Aorta (tissue), 5 donors: ENCODE measurements at regions of chr6 and their contacts with region 1.

Region 1: DNA sequence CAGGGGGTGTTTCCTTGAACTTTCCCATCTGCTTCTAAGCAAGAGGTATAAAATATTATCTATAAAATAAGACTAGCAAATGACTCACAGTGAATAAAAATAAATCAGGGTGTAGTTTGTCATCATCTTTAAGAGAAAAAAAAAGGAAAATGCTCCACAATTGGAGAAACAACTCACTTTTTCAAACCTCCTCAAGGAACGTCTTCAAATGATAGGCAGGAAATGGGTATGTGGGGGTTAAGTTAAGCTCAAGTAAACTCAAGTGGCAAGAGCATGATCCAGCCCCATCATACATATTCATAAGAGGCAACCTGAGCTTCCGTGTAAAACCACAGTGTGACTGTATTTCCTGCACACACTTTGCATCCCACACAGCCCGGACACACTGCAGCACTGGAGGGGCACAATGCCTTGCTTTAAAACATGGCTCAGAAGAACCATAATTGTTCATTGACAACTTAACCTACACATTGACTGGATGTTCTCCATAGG is 58.5 kb upstream of the CEP85L start:
- DNase-seq: no peak
- ATAC-seq: no peak
- H3K4me3 ChIP-seq: peak overlapping the region; percentile 25 to 57
- H3K27ac ChIP-seq: no peak overlapping the region
- H3K4me1 ChIP-seq: no peaks in the 10 kb centered on the region
- H3K27me3 ChIP-seq: no peaks in the 10 kb centered on the region

Region 2: GRCh38 chr6:118651282-118652050 is 58.4 kb before region 1 on chr6 and contains the start of gene CEP85L:
- intact Hi-C with region 1: loop called in 1 of 2 experiments (anchors 5 kb)
- DNase-seq: peak; percentile 95 to 97
- ATAC-seq: peak; percentile 97
- H3K4me3 ChIP-seq: peak within 1 kb of the TSS; percentile 85 to 88
- H3K27ac ChIP-seq: peak within 1 kb of the TSS; percentile 71 to 92
- H3K4me1 ChIP-seq: no peaks in the 10 kb centered on the region
- H3K27me3 ChIP-seq: no peaks in the 10 kb centered on the region
- total RNA-seq, gene CEP85L: 17.2 to 21.3 TPM

Region 3: GRCh38 chr6:118663993-118664985 is 45.6 kb before region 1 on chr6:
- intact Hi-C with region 1: no loop called
- DNase-seq: no peak
- ATAC-seq: no peak
- H3K4me3 ChIP-seq: no peak overlapping the region
- H3K27ac ChIP-seq: no peak overlapping the region
- H3K4me1 ChIP-seq: no peaks in the 10 kb centered on the region
- H3K27me3 ChIP-seq: no peaks in the 10 kb centered on the region